Left cardiac atrium (tissue), 4 donors: ENCODE measurements at regions of chr16 and their contacts with region 1.

Region 1: DNA sequence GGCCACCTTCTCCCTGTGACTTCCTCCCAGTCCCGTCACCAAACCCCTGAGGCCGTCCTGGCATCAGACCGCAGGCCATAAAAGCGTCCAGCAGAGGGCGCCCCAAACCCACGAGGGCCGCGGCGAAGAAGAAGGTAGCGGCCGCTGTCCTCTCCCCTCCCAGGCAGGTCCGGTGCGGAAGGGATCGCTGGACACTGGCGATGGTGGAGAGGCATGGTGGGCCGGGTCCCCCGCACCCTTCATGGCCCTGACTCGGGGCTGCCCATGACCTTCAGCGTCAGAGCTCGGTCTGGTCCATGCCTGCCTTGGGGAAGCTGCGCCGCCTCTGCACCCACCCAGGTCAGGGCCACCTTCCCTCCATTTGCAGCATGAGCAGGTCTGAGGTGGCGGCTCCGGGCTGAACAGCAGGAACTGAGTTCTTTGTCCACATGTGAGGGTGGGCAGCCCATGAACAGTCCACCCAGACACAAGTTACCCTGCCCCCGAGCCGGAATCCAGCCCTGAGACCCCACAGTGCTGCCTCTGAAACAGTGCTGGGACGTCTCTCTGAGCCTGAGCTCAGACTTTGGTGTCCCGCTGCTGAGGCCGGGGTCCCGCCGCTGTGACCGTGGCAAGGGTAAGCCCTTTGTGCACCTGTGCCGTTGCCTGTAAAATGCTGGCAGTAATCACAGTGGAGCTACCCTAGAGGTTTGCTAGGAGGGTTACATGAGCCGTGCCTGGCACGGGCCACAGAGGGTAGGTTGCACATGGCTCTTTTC is 40.8 kb upstream of the CMIP start:
- DNase-seq: peak; percentile 88
- ATAC-seq: peak; percentile 90 to 93

Region 2: DNA sequence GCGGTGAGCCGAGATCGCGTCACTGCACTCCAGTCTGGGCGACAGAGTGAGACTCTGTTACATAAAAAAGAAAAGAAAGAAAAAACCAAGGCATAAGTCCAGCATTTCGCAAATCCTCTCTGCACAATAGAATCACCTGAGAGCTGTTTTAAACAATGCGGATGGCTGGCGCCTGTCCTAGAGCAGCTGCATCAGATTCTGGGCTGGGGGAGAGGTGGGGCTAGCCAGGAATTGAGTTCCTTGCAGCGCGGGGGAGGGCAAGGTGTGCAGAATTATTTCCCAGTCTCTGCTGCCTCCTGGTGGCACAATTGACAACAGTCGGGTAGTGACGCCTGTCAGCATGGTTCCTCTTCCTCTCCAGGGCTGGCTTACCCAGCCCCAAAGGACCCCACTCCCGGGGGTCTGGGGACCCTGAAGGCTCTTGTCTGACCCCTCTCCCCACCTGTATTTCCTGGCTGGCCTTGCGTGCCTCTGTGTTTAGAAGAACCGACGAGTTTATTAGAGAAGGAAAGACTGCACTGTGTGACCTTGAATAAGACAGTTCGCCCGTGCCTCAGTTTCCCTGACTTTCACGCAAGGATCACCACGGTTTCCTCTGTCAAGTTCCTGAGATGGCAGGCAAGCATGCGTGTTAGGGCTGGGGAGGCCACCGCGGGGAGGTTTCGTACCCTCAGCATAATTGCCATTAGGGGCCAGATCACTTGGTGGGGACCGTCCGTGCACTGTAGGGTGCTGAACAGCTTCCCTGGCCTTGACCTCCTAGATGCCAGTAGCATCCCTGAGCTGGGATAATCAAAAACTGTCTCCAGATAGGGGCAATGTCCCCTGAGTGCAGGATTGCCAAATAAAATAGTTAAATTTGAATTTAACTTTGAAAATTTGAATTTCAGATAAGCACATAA is 334.3 kb after region 1 on chr16:
- intact Hi-C with region 1: loop called in 1 of 2 experiments (anchors 5 kb)
- DNase-seq: peak; percentile 85
- ATAC-seq: peak; percentile 93 to 94